ENCODE measurements at regions of chr4 and their contacts with region 1.

Region 1: DNA sequence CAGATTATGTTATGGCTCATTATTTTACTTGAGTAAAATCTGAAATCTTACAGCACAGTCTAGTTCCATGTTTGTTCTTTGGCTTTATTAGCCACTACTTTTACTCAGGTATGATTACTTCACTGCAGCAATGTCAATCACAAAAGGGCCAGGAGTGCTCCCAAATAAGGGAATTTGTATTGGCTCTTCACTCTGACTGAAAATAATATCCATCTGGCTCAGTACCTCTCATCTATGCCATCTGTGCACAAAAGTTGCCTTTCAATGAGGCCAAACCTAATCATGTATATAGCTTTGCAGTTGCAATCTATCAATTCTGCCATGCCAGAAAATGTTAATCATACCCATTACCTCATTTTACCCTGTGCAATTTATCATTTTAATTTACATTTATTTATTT is 161.1 kb downstream of the TECRL start:
- DNase-seq: no peak
- ATAC-seq: no peak
- H3K4me3 ChIP-seq: no peak overlapping the region
- H3K27ac ChIP-seq: no peak overlapping the region
- H3K4me1 ChIP-seq: no peaks in the 10 kb centered on the region
- H3K27me3 ChIP-seq: no peaks in the 10 kb centered on the region
- CTCF ChIP-seq: no peak
- EP300 ChIP-seq: no peak
- POLR2A ChIP-seq: no peak
- RAD21 ChIP-seq: no peak

Region 2: DNA sequence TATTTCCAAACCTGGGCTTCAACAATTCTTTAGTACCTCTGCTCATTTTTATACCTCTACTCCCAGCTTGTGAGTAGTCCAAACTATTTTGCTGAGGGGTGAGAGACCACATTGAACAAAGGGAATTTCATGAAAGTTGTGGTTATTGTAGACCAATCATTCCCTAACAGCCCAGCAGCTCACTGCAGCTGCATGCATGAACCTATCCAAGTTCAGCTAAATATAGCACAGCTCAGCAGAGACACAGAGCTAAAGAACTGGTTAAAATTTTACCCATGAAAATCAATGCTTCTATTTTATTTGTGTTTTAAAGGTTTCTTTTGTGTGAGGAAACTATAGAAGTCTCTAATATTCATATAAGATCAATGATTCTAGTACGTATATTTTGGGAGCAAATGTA is 78.3 kb after region 1 on chr4:
- CTCF ChIA-PET with region 1: no interaction called
- POLR2A ChIA-PET with region 1: no interaction called
- RAD21 ChIA-PET with region 1: no interaction called
- SMC1A ChIA-PET with region 1: no interaction called
- in situ Hi-C with region 1: no loop called
- intact Hi-C with region 1: loop called (anchors 5 kb)
- DNase-seq: no peak
- ATAC-seq: no peak
- H3K4me3 ChIP-seq: no peak overlapping the region
- H3K27ac ChIP-seq: no peak overlapping the region
- H3K4me1 ChIP-seq: no peaks in the 10 kb centered on the region
- H3K27me3 ChIP-seq: no peaks in the 10 kb centered on the region
- CTCF ChIP-seq: no peak
- EP300 ChIP-seq: no peak
- POLR2A ChIP-seq: no peak
- RAD21 ChIP-seq: no peak

Measured in GM12878 (cell line).